Transverse colon (tissue), 4 donors: ENCODE measurements at regions of chrX and their contacts with region 1.

Region 1: GRCh38 chrX:50579955-50580354 is 109.3 kb upstream of the DGKK start:
- DNase-seq: peak; percentile 29
- H3K4me3 ChIP-seq: no peak overlapping the region
- H3K27ac ChIP-seq: no peak overlapping the region
- H3K4me1 ChIP-seq: no peaks in the 10 kb centered on the region
- H3K27me3 ChIP-seq: no peaks in the 10 kb centered on the region
- CTCF ChIP-seq: peak; percentile 36 to 45 (median 43)
- EP300 ChIP-seq: no peak
- POLR2A ChIP-seq: no peak

Region 2: DNA sequence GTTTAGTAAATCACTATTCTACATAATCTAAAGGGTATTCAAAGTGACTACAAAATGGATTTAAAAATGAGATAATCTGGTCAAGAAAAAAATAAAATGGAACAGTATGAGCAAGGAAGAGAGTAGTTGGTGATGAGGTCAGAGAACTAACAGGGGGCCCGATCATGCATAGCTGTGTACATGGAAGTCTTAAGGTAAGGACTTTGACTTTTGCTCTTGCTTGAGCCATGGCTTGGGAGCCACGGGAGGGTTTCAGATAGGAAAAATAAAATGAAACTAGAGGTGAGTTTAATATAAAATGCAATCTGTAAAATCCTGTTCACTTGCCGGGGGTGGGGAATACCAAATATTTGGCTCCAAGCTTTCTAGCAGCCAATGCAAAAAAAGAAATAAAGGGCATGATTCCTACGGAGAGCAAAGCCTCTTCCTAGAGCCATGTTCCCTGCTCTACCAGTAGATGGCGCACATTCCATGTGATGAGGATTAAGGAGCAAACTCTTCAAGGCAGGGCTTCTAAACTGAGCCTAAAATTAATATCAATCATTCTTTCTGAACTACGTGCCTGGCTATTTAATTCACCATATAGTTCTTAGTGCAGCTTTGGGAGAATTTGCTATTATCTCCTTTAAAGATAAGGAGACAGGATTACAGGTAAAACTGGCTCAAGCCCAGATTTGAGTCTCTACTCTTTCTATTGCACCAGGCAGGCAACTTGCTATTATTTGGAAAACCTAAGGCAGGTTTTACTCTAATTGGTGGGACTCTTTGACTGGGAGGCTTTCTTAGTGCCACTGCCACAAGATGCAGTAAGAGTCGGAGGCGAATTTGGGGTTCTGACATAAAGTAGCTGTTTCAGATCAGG is 664.4 kb before region 1 on chrX:
- in situ Hi-C with region 1: loop called in 2 of 4 experiments (anchors 10 to 25 kb)
- intact Hi-C with region 1: no loop called
- DNase-seq: peak; percentile 33
- H3K4me3 ChIP-seq: no peak overlapping the region
- H3K27ac ChIP-seq: no peak overlapping the region
- H3K4me1 ChIP-seq: no peaks in the 10 kb centered on the region
- H3K27me3 ChIP-seq: no peaks in the 10 kb centered on the region
- CTCF ChIP-seq: peak; percentile 56 to 88 (median 70)
- EP300 ChIP-seq: no peak
- POLR2A ChIP-seq: no peak

Region 3: GRCh38 chrX:49922291-49923241 is 657.4 kb before region 1 on chrX and contains the start of gene CLCN5:
- in situ Hi-C with region 1: loop called in 2 of 4 experiments (anchors 10 to 25 kb)
- intact Hi-C with region 1: no loop called
- DNase-seq: peak; percentile 96
- H3K4me3 ChIP-seq: peak within 1 kb of the TSS; percentile 48 to 92 (median 72)
- H3K27ac ChIP-seq: peak within 1 kb of the TSS; percentile 81 to 89 (median 85)
- H3K4me1 ChIP-seq: peaks cover 0 to 5% (median 1%) of the 10 kb centered on the region in 4 donors
- H3K27me3 ChIP-seq: no peaks in the 10 kb centered on the region
- CTCF ChIP-seq: no peak
- EP300 ChIP-seq: no peak
- POLR2A ChIP-seq: peak; percentile 52
- total RNA-seq, gene CLCN5: 3.7 to 8.2 (median 5.5) TPM